ENCODE measurements at regions of chr13 and their contacts with region 1.

Region 1: GRCh38 chr13:36965773-36966172 is 33.4 kb downstream of the ALG5 start:
- DNase-seq: peak; percentile 15
- ATAC-seq: peak; percentile 54; the same call in 1 of the 2 replicates
- H3K4me3 ChIP-seq: no peak overlapping the region
- H3K27ac ChIP-seq: no peak overlapping the region
- H3K4me1 ChIP-seq: peaks cover 0 to 14% of the 10 kb centered on the region in 2 experiments; a peak in 2 of 4 replicates
- H3K27me3 ChIP-seq: no peaks in the 10 kb centered on the region
- CTCF ChIP-seq: no peak
- POLR2A ChIP-seq: no peak
- RAD21 ChIP-seq: no peak

Region 2: DNA sequence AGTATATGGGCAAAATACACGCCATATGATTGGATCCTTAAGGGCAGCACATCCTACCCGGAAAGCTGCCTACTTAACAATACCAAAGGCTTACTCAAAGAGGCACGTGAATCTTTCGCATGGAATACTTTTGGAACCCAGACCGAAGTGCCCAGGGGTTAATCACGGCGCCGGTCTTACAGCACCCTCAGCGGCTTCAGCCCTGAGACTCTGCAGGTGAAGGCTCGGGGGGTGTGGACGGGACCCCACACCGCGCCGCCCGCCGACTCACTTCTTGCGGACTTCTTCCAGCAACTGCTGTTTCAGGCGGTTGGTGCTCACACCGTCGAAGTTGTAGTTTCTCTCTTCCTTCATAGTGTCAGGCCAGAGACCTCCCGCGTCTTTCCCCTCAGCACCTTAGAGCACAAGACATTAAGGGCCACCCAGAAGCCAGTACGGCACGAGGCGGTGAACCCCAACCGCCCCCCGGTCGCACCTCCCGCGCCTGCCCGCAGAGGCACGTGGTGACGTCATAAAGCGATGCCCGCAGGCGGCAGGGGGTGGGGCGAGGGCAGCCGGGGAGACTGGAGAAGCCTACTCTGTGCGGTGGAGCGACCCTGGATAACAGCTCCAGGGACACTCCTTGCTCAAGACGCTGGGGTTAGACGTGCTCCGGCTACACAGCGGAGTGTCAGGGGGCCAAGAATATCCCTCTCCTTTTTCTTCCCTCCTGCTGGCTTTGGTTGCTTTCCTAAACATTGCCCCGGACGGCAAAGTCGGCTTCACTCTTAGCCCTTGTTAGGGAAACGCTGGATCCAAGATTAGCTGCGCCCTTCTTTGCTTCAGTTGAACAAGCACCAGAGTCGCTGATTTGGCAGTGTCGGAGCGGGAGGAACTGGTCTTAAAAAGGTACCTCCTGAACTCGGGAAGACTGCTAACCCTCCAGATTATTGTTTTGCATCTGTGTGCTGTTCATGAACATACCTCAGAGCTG is 668.1 kb before region 1 on chr13 and contains the start of gene CCDC169:
- CTCF ChIA-PET with region 1: no interaction called
- POLR2A ChIA-PET with region 1: no interaction called
- RAD21 ChIA-PET with region 1: no interaction called
- intact Hi-C with region 1: loop called (anchors 5 kb)
- DNase-seq: no peak
- ATAC-seq: no peak
- H3K4me3 ChIP-seq: no peak within 1 kb of the TSS
- H3K27ac ChIP-seq: no peak within 1 kb of the TSS
- H3K4me1 ChIP-seq: no peaks in the 10 kb centered on the region
- H3K27me3 ChIP-seq: no peaks in the 10 kb centered on the region
- CTCF ChIP-seq: no peak
- POLR2A ChIP-seq: no peak
- RAD21 ChIP-seq: no peak
- total RNA-seq, gene CCDC169: not detected

Measured in HCT116 (cell line).